ENCODE measurements at regions of chr6 and their contacts with region 1.

Region 1: GRCh38 chr6:106979427-106979884 is 4.9 kb upstream of the CD24 start:
- DNase-seq: peak; percentile 94
- ATAC-seq: peak; percentile 59
- H3K4me3 Mint-ChIP-seq: peak overlapping the region; percentile 19; the same call in 1 of the 2 replicates
- H3K27ac Mint-ChIP-seq: peak overlapping the region; percentile 96
- H3K4me1 Mint-ChIP-seq: peaks cover 45% of the 10 kb centered on the region
- H3K27me3 Mint-ChIP-seq: no peaks in the 10 kb centered on the region
- CTCF ChIP-seq: peak; percentile 91

Region 2: GRCh38 chr6:106512048-106512967 is 467.1 kb before region 1 on chr6:
- CTCF ChIA-PET with region 1: interaction called, 17 read pairs
- POLR2A ChIA-PET with region 1: no interaction called
- DNase-seq: peak; percentile 70
- ATAC-seq: peak; percentile 59
- H3K4me3 Mint-ChIP-seq: peak overlapping the region; percentile 88
- H3K27ac Mint-ChIP-seq: no peak overlapping the region
- H3K4me1 Mint-ChIP-seq: peaks cover 31% of the 10 kb centered on the region
- H3K27me3 Mint-ChIP-seq: peaks cover 72% of the 10 kb centered on the region
- CTCF ChIP-seq: no peak

Region 3: GRCh38 chr6:106608062-106608668 is 371.3 kb before region 1 on chr6:
- CTCF ChIA-PET with region 1: interaction called, 35 read pairs
- POLR2A ChIA-PET with region 1: no interaction called
- DNase-seq: no peak
- ATAC-seq: peak; percentile 89
- H3K4me3 Mint-ChIP-seq: no peak overlapping the region
- H3K27ac Mint-ChIP-seq: no peak overlapping the region
- H3K4me1 Mint-ChIP-seq: peaks cover 40% of the 10 kb centered on the region
- H3K27me3 Mint-ChIP-seq: no peaks in the 10 kb centered on the region; the same call in 1 of the 2 replicates
- CTCF ChIP-seq: peak; percentile 73

Region 4: DNA sequence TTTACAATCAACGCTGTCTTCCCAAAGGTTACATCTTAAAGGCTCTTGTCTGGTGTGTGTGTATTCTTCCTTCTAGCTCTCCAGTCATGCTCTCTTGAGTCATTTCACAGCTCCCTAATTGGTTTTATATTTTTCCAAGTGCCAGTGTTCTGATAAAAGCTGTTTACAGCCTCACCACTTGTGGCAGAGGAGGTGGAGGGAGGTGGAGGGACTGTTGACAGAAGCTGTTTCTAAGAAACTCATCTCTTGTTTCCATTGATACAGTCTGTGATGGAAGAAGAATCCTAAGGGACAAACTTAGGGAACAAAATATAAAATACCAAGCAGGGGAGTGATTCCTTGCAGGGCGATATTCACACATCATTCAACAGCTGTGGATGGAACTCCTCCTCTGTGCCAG is 286.0 kb before region 1 on chr6:
- CTCF ChIA-PET with region 1: interaction called, 13 read pairs
- POLR2A ChIA-PET with region 1: no interaction called
- DNase-seq: no peak
- ATAC-seq: no peak
- H3K4me3 Mint-ChIP-seq: no peak overlapping the region
- H3K27ac Mint-ChIP-seq: no peak overlapping the region; the same call in 1 of the 2 replicates
- H3K4me1 Mint-ChIP-seq: peaks cover 35% of the 10 kb centered on the region
- H3K27me3 Mint-ChIP-seq: no peaks in the 10 kb centered on the region
- CTCF ChIP-seq: no peak

Measured in WTC11 (cell line).